Psoas muscle (tissue), 8 donors: ENCODE measurements at regions of chr3 and their contacts with region 1.

Region 1: GRCh38 chr3:104044002-104044401 is 1322.7 kb upstream of the ALCAM start:
- DNase-seq: no peak
- ATAC-seq: no peak
- H3K4me3 ChIP-seq: no peak overlapping the region
- H3K27ac ChIP-seq: no peak overlapping the region
- H3K4me1 ChIP-seq: no peaks in the 10 kb centered on the region
- H3K27me3 ChIP-seq: no peaks in the 10 kb centered on the region
- CTCF ChIP-seq: no peak

Region 2: DNA sequence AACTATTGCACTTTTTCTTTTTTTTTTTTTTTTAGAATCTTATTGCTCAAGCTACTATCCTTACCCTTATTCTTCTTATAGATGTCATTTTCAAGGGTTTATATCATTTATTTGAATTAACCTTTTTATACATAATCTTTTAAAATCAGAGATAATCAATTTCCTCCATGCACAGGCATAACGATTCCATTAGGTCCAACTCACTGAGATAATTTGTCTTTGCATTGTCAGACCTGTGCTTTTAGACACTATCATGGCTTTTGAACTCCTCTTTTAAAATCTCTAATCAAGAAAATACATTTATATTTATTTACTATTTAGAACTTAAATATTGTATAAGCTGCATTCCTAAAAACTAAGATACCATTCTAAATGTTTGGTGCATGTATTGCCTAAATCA is 154.3 kb before region 1 on chr3:
- intact Hi-C with region 1: loop called in 1 of 2 experiments (anchors 2 kb)
- DNase-seq: no peak
- ATAC-seq: no peak
- H3K4me3 ChIP-seq: no peak overlapping the region
- H3K27ac ChIP-seq: no peak overlapping the region
- H3K4me1 ChIP-seq: no peaks in the 10 kb centered on the region
- H3K27me3 ChIP-seq: no peaks in the 10 kb centered on the region
- CTCF ChIP-seq: no peak